ENCODE measurements at regions of chr3 and their contacts with region 1.

Region 1: DNA sequence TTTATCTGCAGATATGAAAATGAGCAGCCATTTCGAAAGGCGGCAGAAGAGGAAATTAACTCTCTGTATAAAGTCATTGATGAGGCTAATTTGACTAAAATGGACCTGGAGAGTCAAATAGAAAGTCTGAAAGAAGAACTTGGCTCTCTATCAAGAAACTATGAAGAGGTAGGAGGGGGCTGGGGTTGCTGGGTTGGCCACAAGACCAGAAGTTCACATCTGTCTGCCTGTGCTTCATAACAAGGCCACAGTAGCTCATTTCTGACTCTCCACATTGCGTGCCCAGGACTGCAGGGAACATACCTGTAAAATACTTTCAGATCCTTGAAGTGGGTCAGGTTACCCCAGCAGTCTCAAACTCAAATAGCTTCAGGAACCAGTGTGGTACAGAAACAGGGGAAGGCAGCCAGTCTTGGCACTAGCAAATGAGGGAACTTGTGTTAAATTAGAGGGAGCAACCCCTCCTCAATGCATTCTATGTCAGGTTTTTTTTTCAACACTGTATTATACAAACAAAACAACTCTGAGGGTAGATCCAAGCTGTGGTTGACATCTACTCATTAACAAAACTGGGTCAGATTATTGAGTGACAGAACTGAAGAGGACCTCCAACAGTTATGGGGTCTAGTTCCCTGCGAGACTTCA is 48.7 kb downstream of the BFSP2 start:
- DNase-seq: no peak
- H3K4me3 Mint-ChIP-seq: no peak overlapping the region
- H3K27ac Mint-ChIP-seq: no peak overlapping the region
- H3K4me1 Mint-ChIP-seq: peaks cover 14% of the 10 kb centered on the region
- H3K27me3 Mint-ChIP-seq: no peaks in the 10 kb centered on the region
- CTCF ChIP-seq: no peak

Region 2: DNA sequence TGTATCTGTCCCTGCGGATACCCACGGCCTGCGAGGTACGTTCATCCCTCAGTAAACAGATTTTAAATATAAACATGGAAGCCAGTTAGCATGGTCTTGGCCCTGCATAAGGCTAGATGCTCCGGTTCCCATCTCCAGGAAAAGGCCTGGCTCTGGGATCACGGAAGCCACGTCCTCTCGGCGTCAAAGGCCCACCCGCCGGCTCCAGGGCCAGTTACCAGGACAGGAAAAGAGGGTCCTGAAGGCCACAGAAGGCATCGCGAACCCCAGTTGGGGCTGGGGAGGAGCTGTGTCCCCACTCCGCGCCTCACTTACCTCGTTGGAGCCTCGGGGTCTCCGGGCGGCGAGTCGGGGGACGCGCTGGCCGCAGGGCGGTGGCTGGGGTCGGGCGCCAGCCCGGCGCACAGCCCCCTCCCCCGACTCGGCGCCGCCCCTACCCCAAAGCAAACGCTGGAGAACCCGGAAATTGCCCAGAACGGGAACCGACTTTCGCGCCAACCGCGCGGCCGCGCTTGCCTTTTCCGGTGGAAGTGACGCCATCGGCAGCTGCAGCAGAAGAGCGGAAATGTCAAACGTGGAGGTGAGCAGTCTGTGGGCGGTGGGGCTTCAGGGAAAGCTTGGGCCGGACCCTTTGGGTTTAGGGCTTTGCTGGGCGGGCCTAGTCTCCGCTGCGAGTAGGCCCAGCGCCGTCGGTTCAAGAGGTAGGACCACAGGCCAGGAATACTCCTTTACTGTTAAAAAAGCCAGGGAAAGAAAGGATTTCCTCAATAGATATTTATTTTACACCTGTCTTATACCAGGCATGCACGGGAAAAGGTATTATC is 213.1 kb after region 1 on chr3 and contains the start of gene TOPBP1:
- CTCF ChIA-PET with region 1: no interaction called
- intact Hi-C with region 1: loop called (anchors 2 kb)
- DNase-seq: peak; percentile 91
- H3K4me3 Mint-ChIP-seq: peak within 1 kb of the TSS; percentile 82
- H3K27ac Mint-ChIP-seq: peak within 1 kb of the TSS; percentile 59
- H3K4me1 Mint-ChIP-seq: peaks cover 32% of the 10 kb centered on the region
- H3K27me3 Mint-ChIP-seq: no peaks in the 10 kb centered on the region
- CTCF ChIP-seq: no peak
- total RNA-seq, gene TOPBP1: 86.6 and 94.7 TPM in 2 replicates

Measured in Calu3 (cell line).